Mammary epithelial cell (primary cell): ENCODE measurements at regions of chr19 and their contacts with region 1.

Region 1: GRCh38 chr19:51904331-51905165 is at the start of gene ZNF649:
- DNase-seq: peak; percentile 85
- H3K4me3 ChIP-seq: peak within 1 kb of the TSS; percentile 84 to 89 (median 88)
- H3K27ac ChIP-seq: peak within 1 kb of the TSS; percentile 64
- H3K4me1 ChIP-seq: no peaks in the 10 kb centered on the region
- H3K27me3 ChIP-seq: no peaks in the 10 kb centered on the region
- CTCF ChIP-seq: no peak
- total RNA-seq, gene ZNF649: 10.2 to 18.7 TPM

Region 2: GRCh38 chr19:51959791-51960190 is 55.2 kb after region 1 on chr19:
- CTCF ChIA-PET with region 1: no interaction called
- dilution Hi-C with region 1: loop called (anchors 5 kb)
- in situ Hi-C with region 1: no loop called
- intact Hi-C with region 1: no loop called
- DNase-seq: no peak
- H3K4me3 ChIP-seq: no peak overlapping the region
- H3K27ac ChIP-seq: no peak overlapping the region
- H3K4me1 ChIP-seq: no peaks in the 10 kb centered on the region
- H3K27me3 ChIP-seq: no peaks in the 10 kb centered on the region
- CTCF ChIP-seq: no peak